OCI-LY7 (cell line): ENCODE measurements at regions of chr15 and their contacts with region 1.

Region 1: DNA sequence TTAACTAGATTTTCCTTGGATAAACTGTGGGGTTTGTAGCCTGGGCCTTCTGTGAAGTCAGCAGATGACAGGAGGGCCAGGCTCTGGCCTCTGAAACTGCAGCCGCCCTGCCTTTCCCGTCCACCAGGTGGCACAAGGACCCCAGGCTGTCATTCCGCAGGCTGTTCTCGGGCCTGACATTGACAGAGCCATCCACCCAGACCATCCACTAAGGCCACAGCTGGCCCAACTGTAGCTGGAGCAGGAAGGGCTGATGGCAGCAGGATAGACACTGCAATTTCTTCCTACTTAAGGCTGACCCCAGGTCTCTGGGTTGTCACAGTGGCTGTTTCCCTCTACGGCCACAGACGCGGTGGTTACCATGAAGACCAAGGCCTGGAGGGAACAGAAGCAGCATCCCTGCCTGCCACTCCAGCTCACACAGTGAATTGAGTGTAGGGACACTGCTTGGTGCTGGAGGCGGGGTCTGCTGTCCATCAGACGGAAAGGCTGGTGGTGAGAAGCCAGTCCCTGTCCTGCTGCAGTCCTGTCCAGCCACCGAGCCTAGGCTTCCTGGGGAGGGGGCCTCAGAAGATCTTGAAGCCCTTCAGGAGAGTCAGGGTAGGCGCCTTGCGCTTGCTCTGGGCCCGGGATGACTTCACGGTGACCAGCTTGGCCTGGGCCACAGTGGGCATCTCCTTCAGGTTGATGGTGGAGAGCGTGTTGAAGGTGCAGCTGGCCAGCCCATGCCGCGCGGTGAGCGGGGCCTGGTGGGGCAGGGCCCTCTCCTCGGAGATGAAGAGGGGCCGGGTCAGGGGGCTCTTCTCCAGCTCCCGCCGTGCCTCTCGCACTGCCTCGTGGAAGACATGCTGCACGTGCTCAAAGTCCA is 9.4 kb downstream of the SLC51B start:
- DNase-seq: peak; percentile 70
- H3K4me3 ChIP-seq: no peak overlapping the region
- H3K27ac ChIP-seq: no peak overlapping the region
- H3K4me1 ChIP-seq: peaks cover 17% of the 10 kb centered on the region
- CTCF ChIP-seq: peak; percentile 85

Region 2: DNA sequence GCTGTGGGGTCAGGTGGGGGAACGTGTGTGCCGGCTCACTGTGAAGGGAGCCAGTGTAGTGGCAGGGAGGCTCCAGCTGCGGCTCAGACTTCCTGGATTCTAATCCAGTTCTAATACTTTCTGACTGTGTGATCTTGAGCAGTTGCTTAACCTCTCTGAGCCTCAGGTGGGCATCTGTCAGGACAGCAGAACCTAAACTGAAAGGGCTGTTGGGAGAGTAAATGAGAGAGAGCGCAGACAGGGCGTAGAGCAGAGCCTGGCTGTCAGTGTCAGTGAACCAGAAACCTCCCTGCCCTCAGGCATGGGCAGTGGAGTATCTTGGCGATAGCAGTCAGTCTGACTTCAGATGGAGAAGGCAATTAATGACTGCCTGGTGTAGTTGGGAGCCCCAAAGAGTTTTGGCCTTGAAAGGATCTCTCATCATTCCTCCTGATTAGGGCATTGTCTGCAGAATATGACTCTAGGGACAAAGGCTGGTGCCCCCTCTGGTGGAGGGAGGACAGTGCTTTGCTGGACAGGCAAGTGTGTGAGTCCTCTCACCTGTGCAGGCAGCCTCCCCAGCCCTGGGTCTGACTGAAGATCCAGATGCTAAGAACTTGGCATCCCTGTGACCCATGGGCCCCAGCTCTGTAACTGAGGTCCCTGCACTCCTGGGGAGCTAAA is 31.6 kb after region 1 on chr15:
- CTCF ChIA-PET with region 1: no interaction called
- POLR2A ChIA-PET with region 1: no interaction called
- intact Hi-C with region 1: loop called (anchors 2 kb)
- DNase-seq: peak; percentile 20
- H3K4me3 ChIP-seq: no peak overlapping the region
- H3K27ac ChIP-seq: no peak overlapping the region
- H3K4me1 ChIP-seq: no peaks in the 10 kb centered on the region
- CTCF ChIP-seq: 0 out of 2 replicates have a peak, but pooled peaks have one; percentile 37

Region 3: DNA sequence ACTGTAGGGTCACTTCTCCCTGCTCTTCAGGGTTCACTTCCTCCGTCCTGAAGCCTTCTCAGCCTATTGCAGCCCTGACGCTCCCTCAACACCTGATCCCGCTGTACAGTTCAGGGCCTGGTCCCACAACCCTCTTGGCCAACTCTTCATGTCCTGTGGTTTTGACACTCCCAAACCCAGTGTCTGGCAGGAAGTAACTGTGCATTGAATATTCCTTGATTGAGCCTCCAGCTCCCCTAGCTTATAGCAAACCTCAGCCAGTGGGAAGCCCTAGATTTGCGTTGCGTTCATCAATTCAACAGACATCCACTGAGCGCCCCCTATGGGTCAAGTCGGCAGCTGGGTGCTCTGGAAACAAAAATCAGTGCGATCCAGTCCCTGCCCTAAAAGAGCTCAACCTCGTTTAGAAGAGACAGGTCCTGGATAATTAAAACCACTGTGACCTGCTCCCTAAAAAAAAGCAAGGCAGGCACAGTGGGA is 46.9 kb after region 1 on chr15:
- CTCF ChIA-PET with region 1: no interaction called
- POLR2A ChIA-PET with region 1: no interaction called
- intact Hi-C with region 1: loop called (anchors 1 kb)
- DNase-seq: peak; percentile 49
- H3K4me3 ChIP-seq: no peak overlapping the region
- H3K27ac ChIP-seq: no peak overlapping the region
- H3K4me1 ChIP-seq: no peaks in the 10 kb centered on the region
- CTCF ChIP-seq: peak; percentile 91